PC-9 (cell line): ENCODE measurements at regions of chr3 and their contacts with region 1.

Region 1: GRCh38 chr3:23372285-23372684 is 169.2 kb downstream of the UBE2E2 start:
- DNase-seq: no peak
- H3K4me3 ChIP-seq: no peak overlapping the region
- H3K27ac ChIP-seq: no peak overlapping the region
- H3K4me1 ChIP-seq: no peaks in the 10 kb centered on the region
- H3K27me3 ChIP-seq: no peaks in the 10 kb centered on the region
- CTCF ChIP-seq: no peak

Region 2: GRCh38 chr3:23356169-23356568 is 16.1 kb before region 1 on chr3:
- CTCF ChIA-PET with region 1: no interaction called
- POLR2A ChIA-PET with region 1: no interaction called
- intact Hi-C with region 1: loop called (anchors 2 kb)
- DNase-seq: no peak
- H3K4me3 ChIP-seq: no peak overlapping the region
- H3K27ac ChIP-seq: no peak overlapping the region
- H3K4me1 ChIP-seq: no peaks in the 10 kb centered on the region
- H3K27me3 ChIP-seq: no peaks in the 10 kb centered on the region
- CTCF ChIP-seq: no peak